H1 (cell line): ENCODE measurements at regions of chr3 and their contacts with region 1.

Region 1: GRCh38 chr3:171566803-171567422 is 106.7 kb upstream of the TNIK start:
- DNase-seq: no peak
- H3K4me3 ChIP-seq: no peak overlapping the region
- H3K27ac ChIP-seq: no peak overlapping the region
- H3K4me1 ChIP-seq: no peaks in the 10 kb centered on the region
- H3K27me3 ChIP-seq: peaks cover 0 to 1% (median 0%) of the 10 kb centered on the region in 4 experiments; a peak in 1 of 7 replicates
- CTCF ChIP-seq: peak in 2 of 3 experiments; percentile 60 to 71; a peak in 2 of 4 replicates
- EP300 ChIP-seq: no peak
- POLR2A ChIP-seq: no peak
- RAD21 ChIP-seq: peak; percentile 91 to 92

Region 2: GRCh38 chr3:171049861-171050444 is 517.0 kb before region 1 on chr3:
- CTCF ChIA-PET with region 1: interaction called, 24 read pairs
- POLR2A ChIA-PET with region 1: no interaction called
- DNase-seq: peak; percentile 36 to 65
- H3K4me3 ChIP-seq: no peak overlapping the region
- H3K27ac ChIP-seq: no peak overlapping the region
- H3K4me1 ChIP-seq: no peaks in the 10 kb centered on the region
- H3K27me3 ChIP-seq: no peaks in the 10 kb centered on the region
- CTCF ChIP-seq: peak; percentile 67 to 84 (median 68)
- EP300 ChIP-seq: no peak
- POLR2A ChIP-seq: no peak
- RAD21 ChIP-seq: peak; percentile 91 to 92

Region 3: GRCh38 chr3:171602072-171602471 is 35.2 kb after region 1 on chr3:
- CTCF ChIA-PET with region 1: no interaction called
- POLR2A ChIA-PET with region 1: no interaction called
- DNase-seq: no peak
- H3K4me3 ChIP-seq: no peak overlapping the region
- H3K27ac ChIP-seq: no peak overlapping the region
- H3K4me1 ChIP-seq: no peaks in the 10 kb centered on the region
- H3K27me3 ChIP-seq: no peaks in the 10 kb centered on the region
- CTCF ChIP-seq: no peak
- EP300 ChIP-seq: no peak
- POLR2A ChIP-seq: no peak
- RAD21 ChIP-seq: no peak